ENCODE measurements at regions of chr14 and their contacts with region 1.

Region 1: GRCh38 chr14:75293920-75294642 is 15.5 kb downstream of the FOS start:
- DNase-seq: peak; percentile 98 to 100
- H3K4me3 ChIP-seq: peak overlapping the region; percentile 65
- H3K27ac ChIP-seq: peak overlapping the region; percentile 79
- H3K4me1 ChIP-seq: peaks cover 40% of the 10 kb centered on the region
- H3K27me3 ChIP-seq: no peaks in the 10 kb centered on the region
- CTCF ChIP-seq: no peak

Region 2: GRCh38 chr14:74881431-74882361 is 412.4 kb before region 1 on chr14 and contains the start of gene DLST:
- CTCF ChIA-PET with region 1: interaction called, 5 read pairs
- POLR2A ChIA-PET with region 1: no interaction called
- intact Hi-C with region 1: loop called (anchors 10 kb)
- DNase-seq: peak; percentile 78 to 99
- H3K4me3 ChIP-seq: peak within 1 kb of the TSS; percentile 75
- H3K27ac ChIP-seq: peak within 1 kb of the TSS; percentile 17
- H3K4me1 ChIP-seq: peaks cover 49% of the 10 kb centered on the region
- H3K27me3 ChIP-seq: no peaks in the 10 kb centered on the region
- CTCF ChIP-seq: no peak
- total RNA-seq, gene DLST: 309 and 320 TPM in 2 replicates

Region 3: GRCh38 chr14:75141967-75142366 is 152.1 kb before region 1 on chr14:
- CTCF ChIA-PET with region 1: interaction called, 19 read pairs
- POLR2A ChIA-PET with region 1: interaction called, 6 read pairs
- intact Hi-C with region 1: no loop called
- DNase-seq: peak in 1 of 2 experiments; percentile 28
- H3K4me3 ChIP-seq: no peak overlapping the region
- H3K27ac ChIP-seq: peak overlapping the region; percentile 7; the same call in 1 of the 2 replicates
- H3K4me1 ChIP-seq: no peaks in the 10 kb centered on the region
- H3K27me3 ChIP-seq: no peaks in the 10 kb centered on the region
- CTCF ChIP-seq: peak; percentile 61

Region 4: DNA sequence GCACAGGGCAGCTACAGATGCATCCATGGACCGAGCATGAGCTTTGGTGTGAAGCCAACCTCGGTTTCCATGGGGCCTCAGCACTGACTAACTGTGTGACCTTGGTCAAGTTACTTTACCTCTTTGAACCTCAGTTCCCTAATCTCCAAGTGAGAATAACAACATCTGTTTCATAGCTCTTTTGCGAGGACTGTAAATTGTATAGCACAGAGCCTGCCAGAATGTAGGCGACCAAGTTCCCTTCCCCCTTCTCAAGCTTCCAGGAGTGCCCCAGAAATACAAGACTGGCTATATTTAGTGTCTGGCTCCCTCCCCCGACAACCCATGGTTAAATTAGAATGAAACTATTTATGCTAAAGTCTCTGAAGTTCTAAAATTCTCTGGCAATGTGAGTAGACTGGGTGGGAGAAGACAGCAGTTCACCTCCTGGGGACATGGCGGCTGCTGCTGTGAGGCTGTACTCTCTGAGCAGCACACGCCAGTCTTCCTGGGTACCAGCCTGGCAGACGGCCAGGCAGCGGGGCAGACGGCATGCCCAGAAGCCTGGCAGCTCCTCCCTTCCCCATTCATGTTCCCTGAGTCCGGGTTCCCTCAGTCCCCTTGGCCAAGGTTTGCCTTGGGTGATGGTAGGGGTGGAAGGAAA is 95.7 kb before region 1 on chr14:
- CTCF ChIA-PET with region 1: interaction called, 3 read pairs
- POLR2A ChIA-PET with region 1: interaction called, 18 read pairs
- intact Hi-C with region 1: loop called (anchors 1 kb)
- DNase-seq: no peak
- H3K4me3 ChIP-seq: no peak overlapping the region
- H3K27ac ChIP-seq: no peak overlapping the region
- H3K4me1 ChIP-seq: peaks cover 56% of the 10 kb centered on the region
- H3K27me3 ChIP-seq: no peaks in the 10 kb centered on the region
- CTCF ChIP-seq: no peak

Region 5: DNA sequence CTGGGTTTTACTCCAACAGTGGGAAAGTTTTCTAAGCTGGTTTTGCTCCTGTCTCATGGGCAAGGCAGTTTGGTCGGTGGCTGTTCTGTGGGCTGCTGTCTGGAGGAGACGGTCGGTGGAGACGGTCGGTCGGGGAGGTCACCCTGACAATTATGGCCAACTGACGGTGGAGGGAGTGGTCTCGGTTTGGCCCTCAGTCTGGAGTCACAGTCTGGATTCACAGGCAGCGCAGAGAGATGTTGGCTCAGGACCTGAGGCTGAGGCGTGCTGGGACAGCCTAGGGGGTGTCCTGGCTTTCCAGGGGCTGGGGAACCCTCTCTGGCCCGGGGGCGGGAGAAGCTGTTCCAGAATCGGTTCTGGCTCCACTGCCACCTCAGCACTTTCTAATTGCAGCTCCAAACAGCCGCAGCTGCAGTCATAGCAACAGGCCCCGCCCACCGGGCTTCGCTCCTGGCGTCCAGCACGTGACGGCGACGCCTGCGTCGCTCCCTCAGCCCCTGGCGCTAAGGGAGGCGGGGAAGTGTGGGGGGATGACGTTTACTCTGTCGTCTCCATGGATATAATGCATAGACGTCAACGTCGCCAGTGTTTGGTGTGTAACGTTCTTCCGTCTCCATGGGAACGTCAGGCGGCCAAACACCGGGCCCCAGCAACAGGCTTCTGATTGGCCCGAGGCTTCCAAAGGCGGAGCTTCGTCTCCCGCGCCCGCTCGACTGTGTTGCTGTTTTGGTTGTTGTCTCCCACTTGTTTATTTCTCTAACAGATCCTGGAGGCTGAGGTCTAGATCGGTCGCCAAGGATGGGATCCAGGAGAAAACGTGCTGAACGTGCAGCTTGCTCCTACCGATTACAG is 35.2 kb before region 1 on chr14:
- CTCF ChIA-PET with region 1: interaction called, 7 read pairs
- POLR2A ChIA-PET with region 1: interaction called, 63 read pairs
- intact Hi-C with region 1: loop called (anchors 1 kb)
- DNase-seq: peak; percentile 100
- H3K4me3 ChIP-seq: peak overlapping the region; percentile 56
- H3K27ac ChIP-seq: peak overlapping the region; percentile 83
- H3K4me1 ChIP-seq: peaks cover 63% of the 10 kb centered on the region
- H3K27me3 ChIP-seq: no peaks in the 10 kb centered on the region
- CTCF ChIP-seq: no peak

Region 6: DNA sequence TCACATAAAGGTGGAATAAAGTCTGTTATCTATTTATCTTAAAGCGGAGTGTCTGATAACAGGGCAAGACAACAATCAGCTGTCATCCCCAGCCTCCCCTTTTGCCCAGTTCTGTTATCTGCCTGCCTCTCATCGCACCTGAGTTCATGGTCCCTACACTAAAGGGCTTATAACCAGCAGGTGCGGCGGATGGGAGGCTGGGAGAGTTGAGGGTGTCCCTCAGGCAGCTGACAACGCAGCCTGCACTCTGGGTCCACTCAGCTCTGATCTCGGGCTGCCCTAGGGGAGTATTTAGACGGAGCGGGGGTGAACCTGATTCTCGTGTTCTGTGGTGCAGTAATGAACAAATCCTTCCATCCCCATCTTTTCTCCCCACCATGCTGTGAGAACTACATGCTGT is 99.7 kb after region 1 on chr14:
- CTCF ChIA-PET with region 1: no interaction called
- POLR2A ChIA-PET with region 1: no interaction called
- intact Hi-C with region 1: no loop called
- DNase-seq: no peak
- H3K4me3 ChIP-seq: no peak overlapping the region
- H3K27ac ChIP-seq: no peak overlapping the region
- H3K4me1 ChIP-seq: peaks cover 11% of the 10 kb centered on the region
- H3K27me3 ChIP-seq: no peaks in the 10 kb centered on the region
- CTCF ChIP-seq: no peak

Region 7: GRCh38 chr14:75406856-75407255 is 112.8 kb after region 1 on chr14:
- CTCF ChIA-PET with region 1: interaction called, 10 read pairs
- POLR2A ChIA-PET with region 1: no interaction called
- intact Hi-C with region 1: no loop called
- DNase-seq: no peak
- H3K4me3 ChIP-seq: no peak overlapping the region
- H3K27ac ChIP-seq: no peak overlapping the region
- H3K4me1 ChIP-seq: peaks cover 4% of the 10 kb centered on the region
- H3K27me3 ChIP-seq: no peaks in the 10 kb centered on the region
- CTCF ChIP-seq: no peak

Measured in PC-9 (cell line).